Activated B cell treated with CpG ODN at 0.5 μM for 24 hours (primary cell): ENCODE measurements at regions of chr9 and their contacts with region 1.

Region 1: DNA sequence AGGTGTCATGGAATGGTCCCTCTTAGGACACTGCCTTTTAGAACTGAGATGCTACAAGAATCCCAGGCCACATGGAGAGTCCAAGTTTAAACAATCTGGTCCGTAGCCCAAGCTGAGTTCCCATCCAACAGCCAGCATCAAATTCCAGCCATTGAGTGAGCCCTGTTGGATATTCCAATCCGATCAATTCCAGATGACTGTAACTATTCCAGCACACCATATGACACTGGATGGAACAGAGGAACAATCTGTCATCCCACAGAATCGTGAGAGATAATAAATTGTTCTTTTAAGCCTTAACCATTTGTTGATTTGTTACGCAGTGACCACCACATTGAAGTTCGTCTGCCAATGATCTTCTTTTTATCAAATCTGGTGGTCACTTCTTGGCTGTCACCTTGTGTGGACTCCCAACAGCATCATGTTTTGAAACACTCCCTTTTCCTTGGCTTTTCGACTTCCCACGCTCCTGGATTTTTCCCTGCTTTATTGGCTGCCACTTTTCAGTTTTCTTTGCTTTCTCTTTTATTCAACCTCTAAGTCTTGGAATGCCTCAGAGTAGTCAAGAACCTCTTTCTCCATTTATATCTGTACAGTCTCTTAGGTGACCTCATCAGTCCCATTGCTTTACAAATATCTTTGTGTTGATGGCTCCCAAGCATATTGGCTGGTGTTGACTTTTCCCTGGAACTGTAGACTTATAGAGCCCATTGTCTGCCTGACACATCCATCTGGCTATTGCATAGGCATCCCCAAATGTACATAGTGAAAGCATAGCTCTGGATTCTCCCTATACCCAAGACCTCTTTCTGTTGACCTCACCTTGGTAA is 46.1 kb downstream of the TNFSF15 start:
- DNase-seq: no peak
- ATAC-seq: no peak
- H3K4me3 Mint-ChIP-seq: no peak overlapping the region
- H3K27ac Mint-ChIP-seq: no peak overlapping the region
- H3K4me1 Mint-ChIP-seq: peaks cover 18% of the 10 kb centered on the region
- H3K27me3 Mint-ChIP-seq: no peaks in the 10 kb centered on the region
- CTCF ChIP-seq: no peak

Region 2: GRCh38 chr9:114774524-114774923 is 14.8 kb after region 1 on chr9:
- CTCF ChIA-PET with region 1: no interaction called
- POLR2A ChIA-PET with region 1: no interaction called
- intact Hi-C with region 1: loop called (anchors 2 kb)
- DNase-seq: no peak
- ATAC-seq: peak; percentile 69
- H3K4me3 Mint-ChIP-seq: no peak overlapping the region
- H3K27ac Mint-ChIP-seq: no peak overlapping the region
- H3K4me1 Mint-ChIP-seq: peaks cover 28% of the 10 kb centered on the region
- H3K27me3 Mint-ChIP-seq: peaks cover 18% of the 10 kb centered on the region
- CTCF ChIP-seq: no peak

Region 3: GRCh38 chr9:115035841-115036612 is 276.3 kb after region 1 on chr9:
- CTCF ChIA-PET with region 1: no interaction called
- POLR2A ChIA-PET with region 1: no interaction called
- intact Hi-C with region 1: no loop called
- DNase-seq: no peak
- ATAC-seq: peak; percentile 56
- H3K4me3 Mint-ChIP-seq: peak overlapping the region; percentile 2
- H3K27ac Mint-ChIP-seq: peak overlapping the region; percentile 8
- H3K4me1 Mint-ChIP-seq: peaks cover 8% of the 10 kb centered on the region
- H3K27me3 Mint-ChIP-seq: peaks cover 5% of the 10 kb centered on the region
- CTCF ChIP-seq: no peak